ENCODE measurements at regions of chr12 and their contacts with region 1.

Region 1: DNA sequence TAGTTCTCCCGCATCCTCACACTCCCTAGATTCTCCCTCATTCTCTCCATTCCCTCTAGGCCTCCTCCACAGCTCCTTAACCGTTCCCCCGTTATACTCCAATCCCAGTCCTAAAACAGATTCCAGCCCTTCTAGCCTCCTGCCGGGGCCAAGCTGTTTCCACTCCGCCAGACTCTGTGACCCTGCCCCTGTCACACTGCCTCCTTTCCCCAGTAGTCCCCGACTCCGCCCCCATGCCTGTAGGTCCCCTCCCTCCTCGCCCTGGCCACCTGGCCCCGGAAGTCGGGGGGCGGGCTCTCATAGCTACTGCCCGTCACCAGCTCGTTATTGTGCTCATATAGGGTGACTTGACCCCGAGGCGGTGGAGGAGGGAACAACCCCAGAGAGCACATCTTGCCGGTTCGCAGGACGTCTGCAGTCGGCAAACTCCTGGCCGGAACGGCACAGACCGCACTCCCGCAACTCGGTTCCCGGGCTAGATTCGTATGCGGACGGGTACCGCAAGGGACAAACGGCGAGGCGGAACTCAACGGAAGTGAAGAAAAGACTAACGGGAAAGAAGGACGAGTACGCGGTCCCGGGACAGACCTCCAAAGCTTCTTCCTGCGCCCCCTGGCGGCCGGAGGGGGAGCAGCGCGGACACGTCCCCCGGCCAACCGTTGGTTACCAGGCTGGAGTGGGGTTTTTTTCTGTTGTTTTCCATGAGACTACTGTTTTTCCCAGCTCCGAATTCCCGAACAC is at the start of gene AAAS:
- DNase-seq: peak; percentile 97
- H3K4me3 ChIP-seq: peak within 1 kb of the TSS; percentile 79
- H3K27ac ChIP-seq: peak within 1 kb of the TSS; percentile 82
- H3K4me1 ChIP-seq: peaks cover 40% of the 10 kb centered on the region
- CTCF ChIP-seq: peak; percentile 98
- total RNA-seq, gene AAAS: 85.5 and 95.6 TPM in 2 replicates

Region 2: GRCh38 chr12:53213348-53213747 is 107.9 kb before region 1 on chr12:
- CTCF ChIA-PET with region 1: interaction called, 9 read pairs
- POLR2A ChIA-PET with region 1: interaction called, 7 read pairs
- intact Hi-C with region 1: loop called (anchors 2 kb)
- DNase-seq: peak; percentile 86
- H3K4me3 ChIP-seq: no peak overlapping the region
- H3K27ac ChIP-seq: no peak overlapping the region
- H3K4me1 ChIP-seq: peaks cover 87% of the 10 kb centered on the region
- CTCF ChIP-seq: peak; percentile 94

Region 3: GRCh38 chr12:53279283-53279869 is 41.9 kb before region 1 on chr12:
- CTCF ChIA-PET with region 1: no interaction called
- POLR2A ChIA-PET with region 1: no interaction called
- intact Hi-C with region 1: no loop called
- DNase-seq: no peak
- H3K4me3 ChIP-seq: no peak overlapping the region
- H3K27ac ChIP-seq: no peak overlapping the region
- H3K4me1 ChIP-seq: no peaks in the 10 kb centered on the region
- CTCF ChIP-seq: no peak

Region 4: DNA sequence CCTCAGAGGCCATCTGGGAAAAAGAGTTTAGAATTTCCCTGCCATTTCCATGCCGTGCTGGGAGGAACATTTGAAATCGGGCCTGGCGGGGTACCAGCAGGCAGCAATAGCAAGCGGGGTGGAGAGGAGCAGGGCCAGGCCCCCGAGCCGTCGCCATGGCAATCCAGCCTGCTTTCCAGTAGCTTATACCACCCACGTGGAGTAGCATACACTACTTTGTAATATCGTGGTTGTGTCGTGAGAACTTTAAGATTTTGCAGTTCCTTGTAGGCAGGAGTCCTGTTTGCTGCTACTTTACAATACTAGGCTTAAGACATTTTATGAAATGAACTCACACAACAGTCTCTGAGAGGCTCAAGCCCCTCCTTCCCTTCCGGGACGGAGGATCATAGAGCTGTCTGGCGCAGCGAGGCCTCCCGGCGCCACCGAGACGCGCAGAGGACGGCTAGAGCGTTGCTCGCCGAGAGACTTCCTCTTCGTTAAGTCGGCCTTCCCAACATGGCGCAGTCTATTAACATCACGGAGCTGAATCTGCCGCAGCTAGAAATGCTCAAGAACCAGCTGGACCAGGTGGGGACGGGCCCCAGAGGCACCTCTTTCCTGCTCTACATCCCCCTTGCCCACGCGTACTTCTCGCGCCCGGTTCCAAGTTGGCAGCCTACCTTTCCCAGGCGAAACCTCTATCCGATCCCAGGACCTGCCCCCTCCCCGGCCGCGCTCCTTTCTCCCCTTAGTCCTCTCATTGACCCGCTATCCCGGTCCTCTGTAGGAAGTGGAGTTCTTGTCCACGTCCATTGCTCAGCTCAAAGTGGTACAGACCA is 26.0 kb before region 1 on chr12 and contains the start of gene PFDN5:
- CTCF ChIA-PET with region 1: interaction called, 4 read pairs
- POLR2A ChIA-PET with region 1: interaction called, 17 read pairs
- intact Hi-C with region 1: loop called (anchors 1 kb)
- DNase-seq: peak; percentile 91
- H3K4me3 ChIP-seq: peak within 1 kb of the TSS; percentile 92
- H3K27ac ChIP-seq: peak within 1 kb of the TSS; percentile 48
- H3K4me1 ChIP-seq: peaks cover 24% of the 10 kb centered on the region
- CTCF ChIP-seq: no peak
- total RNA-seq, gene PFDN5: 348 and 394 TPM in 2 replicates

Region 5: DNA sequence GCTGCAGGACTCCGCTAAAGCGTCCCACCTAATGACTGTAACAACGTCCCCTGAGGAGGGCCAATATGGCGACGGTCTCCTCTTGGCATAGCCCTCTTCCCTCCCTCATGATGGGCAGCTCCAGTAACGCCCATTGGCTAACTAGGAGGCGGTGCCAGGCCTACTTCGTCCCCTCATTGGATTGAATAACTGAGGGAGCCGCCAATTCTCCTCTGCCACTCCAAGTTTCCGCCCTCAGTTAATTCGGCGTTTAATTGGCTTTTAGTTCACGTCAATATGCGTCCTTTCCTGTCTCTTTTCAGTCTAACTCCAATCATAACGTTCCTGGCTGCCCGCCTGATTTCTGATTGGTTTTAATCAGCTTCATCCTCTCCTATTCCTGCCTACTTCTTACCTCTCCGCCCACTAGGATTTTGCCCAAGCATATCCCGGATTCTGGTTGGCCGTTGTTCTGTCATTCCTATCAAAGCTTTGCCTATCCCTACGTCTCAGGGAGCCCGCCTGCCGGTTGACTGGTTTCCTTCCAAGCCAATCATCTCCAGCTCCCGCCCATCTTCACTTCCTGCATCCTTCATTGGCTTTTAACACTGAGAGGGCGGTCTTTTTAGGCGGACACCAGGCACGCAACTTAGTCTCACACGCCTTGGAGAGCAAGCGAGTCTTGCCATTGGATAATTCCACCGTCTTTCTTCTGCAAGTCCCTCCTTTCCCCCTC is 58.3 kb after region 1 on chr12:
- CTCF ChIA-PET with region 1: interaction called, 4 read pairs
- POLR2A ChIA-PET with region 1: interaction called, 7 read pairs
- intact Hi-C with region 1: loop called (anchors 2 kb)
- DNase-seq: peak; percentile 100
- H3K4me3 ChIP-seq: peak overlapping the region; percentile 86
- H3K27ac ChIP-seq: peak overlapping the region; percentile 77
- H3K4me1 ChIP-seq: peaks cover 45% of the 10 kb centered on the region
- CTCF ChIP-seq: no peak

Region 6: DNA sequence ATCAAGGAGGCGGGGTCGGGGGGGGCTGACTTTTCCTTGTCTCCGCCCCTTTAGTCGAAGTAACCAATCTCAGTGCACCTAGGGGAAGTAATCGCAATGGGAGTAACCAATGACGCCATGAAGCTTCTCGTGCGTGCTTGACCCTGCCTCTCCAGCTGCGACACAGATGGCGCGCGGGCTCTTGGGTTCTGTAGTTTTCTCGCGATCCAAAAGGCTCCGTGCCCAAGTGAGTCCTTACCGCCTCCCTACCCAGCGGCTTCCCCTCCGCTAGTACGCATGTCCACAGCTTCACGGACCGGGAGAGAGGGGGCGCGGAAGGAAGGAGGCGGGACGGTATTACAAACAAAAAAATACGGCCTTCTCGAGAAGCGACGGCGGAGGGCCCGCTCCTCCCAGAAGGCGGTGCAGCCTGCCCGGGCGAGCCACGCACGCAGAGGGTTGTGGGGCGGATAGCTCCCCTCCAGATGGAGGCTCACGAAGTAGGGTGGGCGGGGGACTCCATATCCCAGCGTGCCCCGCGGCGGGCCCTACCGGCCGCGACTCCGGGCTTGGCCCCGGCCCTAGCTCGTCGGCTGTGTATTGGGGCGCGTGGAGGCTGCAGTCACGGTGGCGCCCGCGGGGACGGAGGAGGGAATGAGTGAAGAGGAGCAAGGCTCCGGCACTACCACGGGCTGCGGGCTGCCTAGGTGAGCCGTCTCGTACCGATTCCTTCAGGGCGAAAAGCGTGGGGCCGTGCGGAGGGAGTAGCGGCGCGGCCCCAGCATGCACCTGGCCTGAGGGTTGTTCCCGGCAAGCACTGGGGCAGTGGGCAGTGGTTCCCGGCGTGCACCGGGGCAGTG is 179.8 kb after region 1 on chr12 and contains the start of gene TARBP2:
- CTCF ChIA-PET with region 1: interaction called, 8 read pairs
- POLR2A ChIA-PET with region 1: interaction called, 14 read pairs
- intact Hi-C with region 1: loop called (anchors 2 kb)
- DNase-seq: peak; percentile 99
- H3K4me3 ChIP-seq: peak within 1 kb of the TSS; percentile 77
- H3K27ac ChIP-seq: peak within 1 kb of the TSS; percentile 77
- H3K4me1 ChIP-seq: peaks cover 45% of the 10 kb centered on the region
- CTCF ChIP-seq: no peak
- total RNA-seq, gene TARBP2: 49.1 and 62.6 TPM in 2 replicates

Region 7: GRCh38 chr12:53675651-53676453 is 354.6 kb after region 1 on chr12 and contains the start of gene ATP5MC2:
- CTCF ChIA-PET with region 1: no interaction called
- POLR2A ChIA-PET with region 1: no interaction called
- intact Hi-C with region 1: loop called (anchors 5 kb)
- DNase-seq: peak; percentile 98
- H3K4me3 ChIP-seq: peak within 1 kb of the TSS; percentile 94
- H3K27ac ChIP-seq: peak within 1 kb of the TSS; percentile 77
- H3K4me1 ChIP-seq: peaks cover 23% of the 10 kb centered on the region
- CTCF ChIP-seq: peak; percentile 100
- total RNA-seq, gene ATP5MC2: 423 and 500 TPM in 2 replicates

Measured in OCI-LY7 (cell line).